ENCODE measurements at regions of chr18 and their contacts with region 1.

Region 1: DNA sequence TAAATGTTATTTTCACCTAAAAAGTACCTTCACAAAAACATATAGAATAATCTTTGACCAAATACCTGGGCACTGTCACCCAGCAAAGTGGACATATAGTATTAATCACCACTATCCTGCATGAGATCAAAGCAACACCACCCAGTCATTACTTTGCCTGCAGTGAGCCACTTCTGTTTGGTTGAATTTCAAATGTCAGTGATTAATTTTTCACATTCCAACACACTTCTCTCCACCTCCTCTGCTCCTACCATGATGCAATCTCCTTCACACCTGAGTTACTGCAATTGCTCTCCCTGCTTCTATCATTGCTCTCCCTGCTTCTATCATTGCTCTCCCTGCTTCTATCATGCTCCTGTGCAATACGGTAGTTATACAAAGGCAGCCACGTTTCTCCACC is 106.0 kb upstream of the NETO1 start:
- DNase-seq: no peak
- ATAC-seq: no peak
- H3K4me3 ChIP-seq: no peak overlapping the region
- H3K27ac ChIP-seq: no peak overlapping the region
- H3K4me1 ChIP-seq: no peaks in the 10 kb centered on the region
- H3K27me3 ChIP-seq: no peaks in the 10 kb centered on the region
- CTCF ChIP-seq: no peak

Region 2: GRCh38 chr18:72762515-72763122 is 211.2 kb before region 1 on chr18:
- intact Hi-C with region 1: no loop called
- DNase-seq: peak in 1 of 2 donors; percentile 17
- ATAC-seq: no peak
- H3K4me3 ChIP-seq: no peak overlapping the region
- H3K27ac ChIP-seq: no peak overlapping the region
- H3K4me1 ChIP-seq: no peaks in the 10 kb centered on the region
- H3K27me3 ChIP-seq: no peaks in the 10 kb centered on the region
- CTCF ChIP-seq: peak; percentile 47 to 85 (median 78)

Region 3: DNA sequence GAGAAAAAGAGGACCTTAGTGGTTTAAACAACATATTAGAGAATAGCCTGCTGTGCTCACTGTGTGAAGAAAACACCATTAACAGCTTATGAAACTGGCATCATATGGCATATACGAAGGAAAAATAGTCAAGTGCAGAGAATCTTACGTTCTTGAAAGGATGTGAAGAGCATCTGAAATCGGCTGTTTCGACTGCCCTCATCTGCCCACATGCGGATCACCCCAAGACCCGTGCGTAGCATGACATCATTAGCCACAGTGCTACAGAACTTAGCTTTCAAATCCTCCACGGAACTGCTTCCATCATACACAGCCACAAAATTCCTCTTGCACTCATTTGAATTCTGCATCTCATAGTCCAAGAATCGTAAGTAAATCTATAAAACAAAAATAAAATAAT is 190.3 kb before region 1 on chr18:
- intact Hi-C with region 1: no loop called
- DNase-seq: no peak
- ATAC-seq: no peak
- H3K4me3 ChIP-seq: no peak overlapping the region
- H3K27ac ChIP-seq: no peak overlapping the region
- H3K4me1 ChIP-seq: no peaks in the 10 kb centered on the region
- H3K27me3 ChIP-seq: no peaks in the 10 kb centered on the region
- CTCF ChIP-seq: no peak

Region 4: GRCh38 chr18:72995558-72995957 is 21.7 kb after region 1 on chr18:
- intact Hi-C with region 1: loop called in 1 of 10 experiments (anchors 1 kb)
- DNase-seq: no peak
- ATAC-seq: no peak
- H3K4me3 ChIP-seq: no peak overlapping the region
- H3K27ac ChIP-seq: no peak overlapping the region
- H3K4me1 ChIP-seq: no peaks in the 10 kb centered on the region
- H3K27me3 ChIP-seq: no peaks in the 10 kb centered on the region
- CTCF ChIP-seq: no peak